ENCODE measurements at regions of chr7 and their contacts with region 1.

Region 1: GRCh38 chr7:130050773-130051125 is 425 bp downstream of the ZC3HC1 start:
- DNase-seq: no peak
- H3K4me3 ChIP-seq: peak overlapping the region; percentile 67 to 92
- H3K27ac ChIP-seq: peak overlapping the region; percentile 68 to 78
- H3K4me1 ChIP-seq: peaks cover 4 to 9% of the 10 kb centered on the region in 2 experiments; a peak in 3 of 4 replicates
- H3K27me3 ChIP-seq: no peaks in the 10 kb centered on the region
- CTCF ChIP-seq: no peak
- EP300 ChIP-seq: no peak
- RAD21 ChIP-seq: no peak

Region 2: DNA sequence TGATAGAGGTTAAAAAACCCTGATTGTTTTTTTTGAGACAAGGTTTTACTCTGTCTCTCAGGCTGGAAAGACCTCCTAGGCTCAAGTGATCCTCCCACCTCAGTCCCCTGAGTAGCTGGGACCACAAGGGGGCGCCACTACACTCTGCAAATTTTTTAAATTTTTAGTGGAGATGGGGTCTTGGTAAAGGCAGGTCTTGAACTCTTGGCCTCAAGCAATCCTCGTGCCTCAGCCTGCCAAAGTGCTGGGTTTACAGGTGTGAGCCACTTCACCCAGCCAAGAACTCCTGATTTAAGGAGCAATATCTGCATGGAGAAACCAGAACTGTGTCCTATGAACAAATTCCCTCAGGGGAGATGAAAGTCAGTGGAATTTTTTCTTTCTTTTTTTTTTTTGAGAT is 12.3 kb after region 1 on chr7:
- CTCF ChIA-PET with region 1: interaction called, 12 read pairs
- POLR2A ChIA-PET with region 1: interaction called, 3 read pairs
- DNase-seq: peak; percentile 70
- H3K4me3 ChIP-seq: no peak overlapping the region; a peak in 1 of 4 replicates
- H3K27ac ChIP-seq: no peak overlapping the region
- H3K4me1 ChIP-seq: no peaks in the 10 kb centered on the region
- H3K27me3 ChIP-seq: no peaks in the 10 kb centered on the region
- CTCF ChIP-seq: peak; percentile 94
- EP300 ChIP-seq: no peak
- RAD21 ChIP-seq: peak; percentile 68